B cell (primary cell): ENCODE measurements at regions of chr12 and their contacts with region 1.

Region 1: GRCh38 chr12:120669055-120669840 is 17.7 kb upstream of the MLEC start:
- DNase-seq: peak; percentile 79
- ATAC-seq: peak; percentile 74
- H3K4me3 ChIP-seq: peak overlapping the region in 2 of 5 experiments; percentile 5 to 33
- H3K4me3 Mint-ChIP-seq: peak overlapping the region; percentile 77
- H3K27ac ChIP-seq: peak overlapping the region in 1 of 2 donors; percentile 23
- H3K27ac Mint-ChIP-seq: peak overlapping the region; percentile 86
- H3K4me1 ChIP-seq: peaks cover 58 to 66% of the 10 kb centered on the region in 2 donors
- H3K4me1 Mint-ChIP-seq: peaks cover 67% of the 10 kb centered on the region
- H3K27me3 ChIP-seq: peaks cover 0 to 4% (median 2%) of the 10 kb centered on the region in 4 experiments
- H3K27me3 Mint-ChIP-seq: peaks cover 8% of the 10 kb centered on the region
- CTCF ChIP-seq: no peak

Region 2: GRCh38 chr12:120710031-120710804 is 41.0 kb after region 1 on chr12 and contains the start of gene UNC119B:
- CTCF ChIA-PET with region 1: interaction called, 5 read pairs
- POLR2A ChIA-PET with region 1: no interaction called
- intact Hi-C with region 1: loop called (anchors 5 kb)
- DNase-seq: peak; percentile 80
- ATAC-seq: peak; percentile 88
- H3K4me3 ChIP-seq: peak within 1 kb of the TSS; percentile 27 to 89 (median 68)
- H3K4me3 Mint-ChIP-seq: peak within 1 kb of the TSS; percentile 91
- H3K27ac ChIP-seq: peak within 1 kb of the TSS in 1 of 2 donors; percentile 71
- H3K27ac Mint-ChIP-seq: peak within 1 kb of the TSS; percentile 79
- H3K4me1 ChIP-seq: peaks cover 17 to 26% of the 10 kb centered on the region in 2 donors
- H3K4me1 Mint-ChIP-seq: peaks cover 24% of the 10 kb centered on the region
- H3K27me3 ChIP-seq: no peaks in the 10 kb centered on the region
- H3K27me3 Mint-ChIP-seq: no peaks in the 10 kb centered on the region
- CTCF ChIP-seq: no peak
- total RNA-seq, gene UNC119B: 19.2 and 22.7 TPM in 2 replicates

Region 3: DNA sequence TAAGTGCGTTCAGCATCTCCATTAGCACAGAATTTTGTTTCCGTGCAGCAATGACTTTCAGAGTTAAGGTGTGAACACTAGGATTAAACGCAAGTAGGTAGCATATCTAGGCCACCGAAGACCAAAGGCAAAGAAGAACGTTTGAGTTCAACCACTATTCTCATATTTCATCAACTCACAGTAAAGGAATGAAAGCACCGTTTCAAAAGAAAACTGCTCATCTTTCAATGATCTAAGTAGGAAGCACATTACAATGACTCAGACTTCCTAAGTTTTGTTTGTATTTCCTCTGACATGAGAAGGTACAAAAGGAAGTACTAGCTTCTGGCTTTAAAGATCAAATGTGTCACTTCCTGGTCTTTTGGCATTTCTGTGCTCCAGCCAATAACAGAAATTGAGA is 113.9 kb after region 1 on chr12:
- CTCF ChIA-PET with region 1: no interaction called
- POLR2A ChIA-PET with region 1: interaction called, 10 read pairs
- intact Hi-C with region 1: no loop called
- DNase-seq: no peak
- ATAC-seq: no peak
- H3K4me3 ChIP-seq: no peak overlapping the region
- H3K4me3 Mint-ChIP-seq: no peak overlapping the region
- H3K27ac ChIP-seq: no peak overlapping the region
- H3K27ac Mint-ChIP-seq: no peak overlapping the region
- H3K4me1 ChIP-seq: no peaks in the 10 kb centered on the region
- H3K4me1 Mint-ChIP-seq: no peaks in the 10 kb centered on the region
- H3K27me3 ChIP-seq: no peaks in the 10 kb centered on the region
- H3K27me3 Mint-ChIP-seq: no peaks in the 10 kb centered on the region
- CTCF ChIP-seq: no peak